ENCODE measurements at regions of chr11 and their contacts with region 1.

Region 1: GRCh38 chr11:8527939-8528338 is 66.1 kb downstream of the STK33 start:
- DNase-seq: peak in 1 of 2 donors; percentile 17
- H3K4me3 ChIP-seq: no peak overlapping the region
- H3K27ac ChIP-seq: no peak overlapping the region
- H3K4me1 ChIP-seq: peaks cover 0 to under 1% of the 10 kb centered on the region in 2 donors
- H3K27me3 ChIP-seq: no peaks in the 10 kb centered on the region
- CTCF ChIP-seq: no peak
- POLR2A ChIP-seq: no peak

Region 2: GRCh38 chr11:8503910-8504364 is 24.0 kb before region 1 on chr11:
- intact Hi-C with region 1: loop called (anchors 2 kb)
- DNase-seq: no peak
- H3K4me3 ChIP-seq: no peak overlapping the region
- H3K27ac ChIP-seq: no peak overlapping the region
- H3K4me1 ChIP-seq: no peaks in the 10 kb centered on the region
- H3K27me3 ChIP-seq: no peaks in the 10 kb centered on the region
- CTCF ChIP-seq: no peak
- POLR2A ChIP-seq: no peak

Region 3: DNA sequence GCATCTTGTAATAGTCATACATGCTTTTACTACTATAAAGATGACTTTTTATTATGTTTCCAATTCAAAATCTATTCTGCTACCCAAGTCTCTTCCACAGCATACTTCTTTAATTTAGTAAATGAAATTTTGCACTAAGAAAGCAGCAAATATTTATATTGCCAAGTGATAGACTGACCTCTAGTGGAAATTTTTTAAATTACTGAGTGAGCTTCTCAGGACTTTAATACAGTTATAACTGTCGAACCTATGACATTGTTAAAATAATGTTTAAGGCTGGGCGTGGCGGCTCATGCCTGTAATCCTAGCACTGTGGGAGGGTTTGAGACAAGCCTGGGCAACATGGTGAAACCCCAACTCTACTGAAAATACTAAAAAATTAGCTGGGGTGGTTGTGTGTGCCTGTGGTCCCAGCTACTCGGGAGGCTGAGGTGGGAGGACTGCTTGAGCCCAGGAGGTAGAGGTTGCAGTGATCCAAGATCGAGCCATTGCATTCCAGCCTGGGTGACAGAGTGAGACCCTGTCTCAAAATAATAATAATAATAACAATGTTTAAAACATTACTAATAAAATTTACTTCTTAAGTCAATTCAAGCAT is 38.8 kb after region 1 on chr11:
- intact Hi-C with region 1: no loop called
- DNase-seq: no peak
- H3K4me3 ChIP-seq: no peak overlapping the region
- H3K27ac ChIP-seq: no peak overlapping the region
- H3K4me1 ChIP-seq: no peaks in the 10 kb centered on the region
- H3K27me3 ChIP-seq: no peaks in the 10 kb centered on the region
- CTCF ChIP-seq: peak; percentile 45 to 83 (median 64)
- POLR2A ChIP-seq: no peak

Measured in thyroid gland (tissue), 4 donors.